PC-3 (cell line): ENCODE measurements at regions of chr5 and their contacts with region 1.

Region 1: GRCh38 chr5:101782352-101783103 is 513.6 kb downstream of the SLCO4C1 start:
- DNase-seq: peak; percentile 62
- ATAC-seq: peak; percentile 78
- H3K4me3 ChIP-seq: peak overlapping the region; percentile 71
- H3K27ac ChIP-seq: peak overlapping the region; percentile 49
- H3K4me1 ChIP-seq: peaks cover 10% of the 10 kb centered on the region
- H3K27me3 ChIP-seq: peaks cover 18% of the 10 kb centered on the region; the same call in 1 of the 2 replicates
- CTCF ChIP-seq: no peak

Region 2: DNA sequence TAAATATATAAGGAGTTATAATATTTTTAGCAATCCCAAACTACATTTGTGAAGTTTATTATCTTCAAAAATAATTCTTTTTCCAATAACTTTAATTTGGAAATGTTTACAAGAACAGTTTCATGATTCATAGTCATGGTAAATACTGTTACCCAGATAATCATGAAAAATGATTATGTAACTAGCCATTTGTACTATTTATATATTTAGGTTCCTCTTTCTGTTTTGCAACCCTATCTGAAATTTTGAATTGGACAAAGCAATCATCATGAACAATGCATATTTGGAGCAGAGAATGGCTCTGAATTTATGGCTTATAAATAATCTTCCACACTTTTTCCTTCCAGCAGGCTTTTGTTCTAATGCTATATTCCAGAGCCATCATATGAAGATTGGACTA is 13.9 kb after region 1 on chr5:
- CTCF ChIA-PET with region 1: no interaction called
- POLR2A ChIA-PET with region 1: interaction called, 13 read pairs
- intact Hi-C with region 1: no loop called
- DNase-seq: no peak
- ATAC-seq: no peak
- H3K4me3 ChIP-seq: no peak overlapping the region
- H3K27ac ChIP-seq: no peak overlapping the region
- H3K4me1 ChIP-seq: no peaks in the 10 kb centered on the region
- H3K27me3 ChIP-seq: 0 out of 2 replicates have a peak, but pooled peaks cover 4% of the 10 kb centered on the region
- CTCF ChIP-seq: no peak

Region 3: DNA sequence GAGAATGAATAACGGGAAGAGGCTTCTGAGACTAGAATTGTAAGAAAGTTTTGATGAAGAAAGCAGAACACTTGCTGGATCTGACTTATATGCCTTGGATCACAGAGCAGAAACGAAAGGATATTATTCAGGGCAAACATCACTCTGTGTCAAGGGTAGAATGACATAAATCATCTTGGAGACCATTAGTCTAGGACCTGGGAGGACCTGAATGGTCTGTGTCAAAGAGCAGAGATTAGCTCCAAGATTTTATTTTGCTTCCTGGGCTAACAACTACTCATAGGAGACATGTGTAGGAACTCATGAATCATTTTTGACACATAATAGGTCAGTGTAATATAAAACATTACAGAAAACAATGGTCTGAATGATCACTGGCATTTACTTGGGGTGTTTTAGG is 95.7 kb after region 1 on chr5:
- CTCF ChIA-PET with region 1: no interaction called
- POLR2A ChIA-PET with region 1: no interaction called
- intact Hi-C with region 1: loop called (anchors 1 kb)
- DNase-seq: peak; percentile 61
- ATAC-seq: peak; percentile 79
- H3K4me3 ChIP-seq: no peak overlapping the region
- H3K27ac ChIP-seq: peak overlapping the region; percentile 51
- H3K4me1 ChIP-seq: 0 out of 2 replicates have a peak, but pooled peaks cover 8% of the 10 kb centered on the region
- H3K27me3 ChIP-seq: no peaks in the 10 kb centered on the region
- CTCF ChIP-seq: no peak

Region 4: GRCh38 chr5:101904736-101905135 is 122.2 kb after region 1 on chr5:
- CTCF ChIA-PET with region 1: no interaction called
- POLR2A ChIA-PET with region 1: no interaction called
- intact Hi-C with region 1: no loop called
- DNase-seq: no peak
- ATAC-seq: no peak
- H3K4me3 ChIP-seq: no peak overlapping the region
- H3K27ac ChIP-seq: no peak overlapping the region
- H3K4me1 ChIP-seq: no peaks in the 10 kb centered on the region
- H3K27me3 ChIP-seq: peaks cover 24% of the 10 kb centered on the region
- CTCF ChIP-seq: no peak

Region 5: DNA sequence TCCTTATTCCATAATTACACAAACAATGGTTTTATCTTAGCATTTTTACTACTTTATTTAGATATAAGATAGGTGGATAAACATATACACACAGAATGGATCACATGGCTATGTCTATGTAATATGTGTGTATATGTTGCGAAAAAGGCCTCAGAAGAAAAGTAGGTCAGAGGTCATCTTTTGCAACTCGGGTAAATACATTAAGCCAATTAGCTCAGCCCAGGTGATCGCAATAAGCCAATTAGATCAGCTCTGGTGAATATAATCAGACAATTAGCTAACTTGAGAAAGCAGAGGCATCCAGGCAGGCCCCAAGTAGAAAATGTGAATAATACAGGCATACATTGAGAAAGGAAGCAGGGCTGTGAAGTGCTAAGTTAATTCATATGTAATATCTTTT is 489.2 kb after region 1 on chr5:
- CTCF ChIA-PET with region 1: no interaction called
- POLR2A ChIA-PET with region 1: no interaction called
- intact Hi-C with region 1: no loop called
- DNase-seq: no peak
- ATAC-seq: no peak
- H3K4me3 ChIP-seq: no peak overlapping the region
- H3K27ac ChIP-seq: no peak overlapping the region
- H3K4me1 ChIP-seq: no peaks in the 10 kb centered on the region
- H3K27me3 ChIP-seq: peaks cover 22% of the 10 kb centered on the region
- CTCF ChIP-seq: no peak